Activated CD4-positive, alpha-beta memory T cell treated with anti-CD3 and anti-CD28 coated beads for 36 hours (primary cell): ENCODE measurements at regions of chr14 and their contacts with region 1.

Region 1: DNA sequence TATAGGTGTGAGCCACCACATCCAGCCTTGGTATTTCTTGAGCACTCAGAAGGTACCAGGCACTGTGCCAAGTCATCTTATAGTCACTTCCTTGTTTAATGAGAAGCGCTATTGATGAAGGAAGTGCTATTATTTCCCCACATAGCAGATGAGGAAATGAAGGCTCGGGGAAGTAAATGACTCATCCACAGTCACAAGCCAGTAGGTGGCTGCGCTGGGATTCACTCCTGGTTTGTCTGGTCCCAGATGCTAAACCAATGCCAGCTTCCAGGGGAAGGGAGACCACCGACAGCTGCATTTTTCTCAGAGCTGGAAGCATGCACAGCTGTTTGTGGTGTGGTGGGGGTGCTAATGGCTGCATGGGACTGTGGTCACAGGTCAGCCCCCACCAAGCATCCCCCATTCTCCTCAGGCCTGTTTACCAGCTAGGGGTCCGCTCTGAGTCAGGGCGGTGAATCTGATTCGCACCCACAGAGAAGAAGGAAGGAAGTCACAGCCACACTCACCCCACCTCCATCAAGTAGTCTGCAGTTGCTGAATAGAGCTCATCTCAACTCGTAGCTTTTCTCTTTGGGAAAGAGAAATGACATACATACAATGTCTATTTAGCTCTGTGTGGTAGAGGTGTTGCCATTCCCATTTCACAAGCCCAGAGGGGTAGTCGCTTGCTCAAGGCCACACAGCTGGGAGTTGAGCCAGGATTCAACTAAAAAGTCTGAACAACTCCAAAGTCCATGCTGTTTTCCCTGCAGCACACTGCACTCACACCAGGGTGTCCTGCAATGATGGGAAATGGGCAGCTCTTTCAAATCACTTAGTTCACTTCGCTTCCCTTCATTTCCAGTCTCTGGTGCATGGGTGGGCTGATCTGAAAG is 6.3 kb upstream of the LTBP2 start:
- DNase-seq: peak; percentile 79
- H3K4me3 Mint-ChIP-seq: no peak overlapping the region
- H3K27ac Mint-ChIP-seq: peak overlapping the region; percentile 73
- H3K4me1 Mint-ChIP-seq: peaks cover 60% of the 10 kb centered on the region
- H3K27me3 Mint-ChIP-seq: peaks cover 1% of the 10 kb centered on the region

Region 2: DNA sequence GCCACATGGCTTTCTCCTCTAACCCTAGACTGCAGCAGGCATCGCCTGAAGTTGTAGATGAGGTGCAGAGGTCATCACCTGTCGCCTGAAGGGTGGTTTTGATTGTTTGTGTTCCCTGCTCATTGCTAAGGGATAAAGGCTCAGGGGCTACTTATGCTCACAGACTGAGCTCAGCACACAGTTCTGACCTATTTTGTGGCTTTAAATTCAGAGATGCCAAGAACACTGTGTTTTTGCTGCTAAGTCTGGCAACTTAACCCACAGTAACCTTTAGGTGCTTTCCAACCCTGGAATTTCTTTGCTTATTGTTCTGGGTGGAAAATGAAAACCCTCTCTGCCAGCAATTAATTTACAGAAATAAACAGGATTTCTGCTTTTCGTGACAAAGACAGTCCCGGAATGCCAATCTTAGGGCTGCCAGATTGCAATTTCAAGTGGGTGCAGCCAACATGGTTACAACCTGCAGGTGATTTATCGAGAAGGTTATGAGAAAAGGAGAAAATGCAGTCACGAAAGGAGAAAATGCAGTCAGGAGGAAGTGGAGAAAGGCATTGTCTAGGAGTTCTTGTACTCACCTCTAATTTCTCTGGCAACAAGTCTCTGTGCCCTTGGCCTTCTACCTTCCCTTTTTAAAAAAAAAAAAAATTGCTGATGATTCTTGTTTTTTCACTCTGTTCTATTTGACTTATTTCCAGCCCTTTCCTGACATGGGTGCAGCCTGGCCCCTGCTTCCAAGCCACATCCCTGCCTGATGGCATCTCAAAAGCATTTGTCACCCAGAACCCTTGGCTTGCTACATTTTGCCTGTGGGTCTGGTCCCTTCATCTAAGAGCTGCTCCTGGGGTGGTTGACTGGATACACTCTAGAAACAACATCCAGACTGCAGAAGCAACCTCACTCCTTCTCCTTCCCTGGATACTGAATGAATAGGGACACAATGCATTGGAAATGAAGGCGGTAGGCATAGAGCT is 148.5 kb before region 1 on chr14:
- CTCF ChIA-PET with region 1: no interaction called
- POLR2A ChIA-PET with region 1: no interaction called
- intact Hi-C with region 1: no loop called
- DNase-seq: no peak
- H3K4me3 Mint-ChIP-seq: no peak overlapping the region
- H3K27ac Mint-ChIP-seq: no peak overlapping the region
- H3K4me1 Mint-ChIP-seq: no peaks in the 10 kb centered on the region
- H3K27me3 Mint-ChIP-seq: no peaks in the 10 kb centered on the region

Region 3: GRCh38 chr14:74571901-74572725 is 46.2 kb before region 1 on chr14:
- CTCF ChIA-PET with region 1: no interaction called
- POLR2A ChIA-PET with region 1: no interaction called
- intact Hi-C with region 1: loop called (anchors 1 kb)
- DNase-seq: peak; percentile 46
- H3K4me3 Mint-ChIP-seq: peak overlapping the region; percentile 14
- H3K27ac Mint-ChIP-seq: peak overlapping the region; percentile 42
- H3K4me1 Mint-ChIP-seq: peaks cover 36% of the 10 kb centered on the region
- H3K27me3 Mint-ChIP-seq: peaks cover 2% of the 10 kb centered on the region

Region 4: DNA sequence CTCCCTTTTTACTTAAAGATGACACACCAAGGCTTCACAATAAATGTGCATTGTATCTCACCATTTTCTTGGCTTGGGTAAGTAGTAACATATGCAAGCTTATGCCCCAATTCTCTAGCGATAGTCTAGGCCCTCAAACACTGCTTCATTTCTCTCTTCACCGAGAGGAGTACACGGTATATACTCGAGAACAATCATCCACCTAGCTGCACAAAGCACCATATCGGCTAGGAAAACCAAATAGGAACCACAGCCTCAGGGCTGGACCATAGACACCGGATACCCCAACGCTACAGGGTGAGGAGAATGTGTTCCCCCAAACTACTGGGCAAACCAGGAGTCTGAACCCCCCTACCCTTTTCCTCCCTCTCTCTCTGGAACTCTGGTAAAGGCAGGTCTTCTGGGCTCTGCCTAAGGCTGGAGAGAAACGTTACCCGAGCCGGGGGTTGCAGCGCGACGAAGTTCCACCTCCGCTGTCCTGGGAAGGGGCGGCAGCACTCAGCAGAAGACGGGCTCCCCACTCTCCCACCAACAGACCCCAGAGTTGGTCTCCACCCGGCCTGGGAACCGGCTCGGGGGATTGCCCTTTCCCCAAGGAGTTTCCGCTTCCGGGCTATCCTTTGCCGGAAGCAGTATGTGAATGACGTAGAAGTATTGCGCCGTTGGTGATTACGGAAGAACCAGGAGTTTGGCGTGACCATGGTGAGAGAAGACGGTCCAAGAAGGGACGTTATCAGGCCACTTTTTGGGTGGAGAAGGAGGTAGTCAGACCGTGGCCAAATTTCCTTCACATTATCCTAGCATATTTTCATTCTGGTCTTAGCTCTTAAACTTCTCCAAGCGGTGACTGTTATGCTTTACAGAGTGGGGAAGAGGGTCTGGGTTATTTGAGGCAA is 94.4 kb after region 1 on chr14 and contains the starts of genes AREL1 and FCF1:
- CTCF ChIA-PET with region 1: no interaction called
- POLR2A ChIA-PET with region 1: no interaction called
- intact Hi-C with region 1: loop called (anchors 2 kb)
- DNase-seq: peak; percentile 90
- H3K4me3 Mint-ChIP-seq: peak within 1 kb of the TSS; percentile 99
- H3K27ac Mint-ChIP-seq: peak within 1 kb of the TSS; percentile 89
- H3K4me1 Mint-ChIP-seq: peaks cover 44% of the 10 kb centered on the region
- H3K27me3 Mint-ChIP-seq: no peaks in the 10 kb centered on the region
- total RNA-seq, gene AREL1: 31.9 to 34.6 TPM
- total RNA-seq, gene FCF1: 72.1 to 72.5 TPM

Region 5: GRCh38 chr14:74841230-74842207 is 223.2 kb after region 1 on chr14:
- CTCF ChIA-PET with region 1: interaction called, 4 read pairs
- POLR2A ChIA-PET with region 1: no interaction called
- intact Hi-C with region 1: loop called (anchors 2 kb)
- DNase-seq: peak; percentile 49
- H3K4me3 Mint-ChIP-seq: no peak overlapping the region
- H3K27ac Mint-ChIP-seq: peak overlapping the region; percentile 83
- H3K4me1 Mint-ChIP-seq: peaks cover 55% of the 10 kb centered on the region
- H3K27me3 Mint-ChIP-seq: no peaks in the 10 kb centered on the region